ENCODE measurements at regions of chr1 and their contacts with region 1.

Region 1: DNA sequence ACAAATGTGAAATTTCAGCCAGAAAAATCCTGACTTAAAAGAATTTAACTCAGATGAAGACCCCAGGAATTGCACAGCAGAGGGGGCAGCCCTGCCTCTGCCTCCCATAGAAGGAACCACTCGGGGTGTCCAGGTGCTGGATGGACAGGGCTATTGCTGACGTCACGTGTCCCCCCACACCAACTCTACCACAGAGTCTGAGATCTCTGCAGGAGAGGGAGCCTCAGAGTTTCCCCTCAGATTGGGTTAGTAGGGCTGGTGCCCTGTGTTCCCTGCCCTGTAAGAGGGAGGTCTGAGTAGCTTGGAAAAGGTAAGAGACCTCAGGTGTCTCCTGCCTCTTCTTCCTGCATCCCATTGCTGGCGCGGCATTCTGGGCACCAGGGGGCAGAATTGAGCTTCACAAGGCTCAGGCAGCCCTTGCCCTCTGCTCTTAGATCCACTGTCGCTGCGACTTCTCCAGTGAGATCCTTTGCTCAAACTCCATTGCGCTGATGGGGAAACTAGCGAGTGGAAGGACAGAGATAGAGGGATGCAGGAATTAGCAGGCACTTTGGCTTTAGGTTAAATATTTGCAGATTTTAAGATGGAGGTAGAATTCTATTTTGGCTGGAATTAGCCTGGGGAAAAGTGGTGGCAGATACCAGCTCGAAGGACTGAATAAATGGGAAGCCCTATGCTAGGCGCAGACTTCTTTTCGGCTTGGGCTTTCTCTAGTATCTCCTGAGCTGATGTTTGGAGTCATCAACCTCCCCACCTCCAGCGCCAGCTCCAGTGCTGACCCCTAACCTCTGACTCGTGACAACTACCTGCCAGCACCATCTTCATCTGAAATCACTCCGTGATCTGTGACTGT is 42.8 kb upstream of the DMBX1 start:
- DNase-seq: peak; percentile 87
- H3K4me3 ChIP-seq: no peak overlapping the region
- H3K27ac ChIP-seq: no peak overlapping the region
- H3K4me1 ChIP-seq: peaks cover 0 to 19% (median 17%) of the 10 kb centered on the region in 4 donors
- H3K27me3 ChIP-seq: peaks cover 23 to 49% (median 38%) of the 10 kb centered on the region in 3 donors
- CTCF ChIP-seq: peak; percentile 48 to 88 (median 65)
- EP300 ChIP-seq: no peak
- POLR2A ChIP-seq: no peak

Region 2: DNA sequence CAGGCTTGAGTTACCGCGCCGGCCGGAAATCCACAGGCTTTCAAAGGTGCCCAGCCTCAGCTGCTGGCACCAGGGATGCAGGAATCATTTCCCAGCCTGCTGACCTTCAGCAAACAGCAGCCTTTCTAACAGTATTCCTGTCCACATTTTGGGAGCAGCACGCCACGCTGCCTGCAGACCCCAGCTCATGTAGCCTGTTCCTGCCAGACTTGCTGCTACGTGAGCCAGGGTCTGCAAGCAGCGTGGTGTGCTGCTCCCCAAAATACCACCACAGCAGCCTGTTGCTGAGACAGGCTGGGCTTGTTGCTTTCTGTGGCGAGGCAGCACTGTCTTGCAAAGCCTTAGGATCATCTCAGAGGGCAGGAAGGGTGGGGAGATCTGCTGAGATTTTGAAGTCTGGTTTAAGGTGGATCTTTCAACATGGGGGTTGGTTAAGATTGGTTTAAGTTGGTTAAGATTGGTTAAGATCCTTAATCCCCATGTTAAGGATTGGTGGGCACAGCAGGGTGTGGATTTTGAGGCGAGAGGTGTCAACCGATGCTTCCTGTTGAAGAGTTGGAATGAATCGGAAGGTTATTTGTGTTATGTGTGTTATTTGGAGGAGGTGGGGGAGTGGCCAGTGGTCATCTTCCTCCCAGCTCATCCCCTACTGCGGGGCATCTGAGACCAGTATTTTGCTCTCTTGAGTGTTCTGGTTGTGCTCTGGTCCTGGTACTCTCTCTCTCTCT is 39.8 kb before region 1 on chr1:
- intact Hi-C with region 1: loop called (anchors 5 kb)
- DNase-seq: no peak
- H3K4me3 ChIP-seq: peak overlapping the region; percentile 3 to 35 (median 25)
- H3K27ac ChIP-seq: peak overlapping the region in 1 of 4 donors; percentile 7
- H3K4me1 ChIP-seq: peaks cover 0 to 20% (median 16%) of the 10 kb centered on the region in 4 donors
- H3K27me3 ChIP-seq: no peaks in the 10 kb centered on the region
- CTCF ChIP-seq: no peak
- EP300 ChIP-seq: no peak
- POLR2A ChIP-seq: no peak

Measured in sigmoid colon (tissue), 7 donors.